ENCODE measurements at regions of chr12 and their contacts with region 1.

Region 1: DNA sequence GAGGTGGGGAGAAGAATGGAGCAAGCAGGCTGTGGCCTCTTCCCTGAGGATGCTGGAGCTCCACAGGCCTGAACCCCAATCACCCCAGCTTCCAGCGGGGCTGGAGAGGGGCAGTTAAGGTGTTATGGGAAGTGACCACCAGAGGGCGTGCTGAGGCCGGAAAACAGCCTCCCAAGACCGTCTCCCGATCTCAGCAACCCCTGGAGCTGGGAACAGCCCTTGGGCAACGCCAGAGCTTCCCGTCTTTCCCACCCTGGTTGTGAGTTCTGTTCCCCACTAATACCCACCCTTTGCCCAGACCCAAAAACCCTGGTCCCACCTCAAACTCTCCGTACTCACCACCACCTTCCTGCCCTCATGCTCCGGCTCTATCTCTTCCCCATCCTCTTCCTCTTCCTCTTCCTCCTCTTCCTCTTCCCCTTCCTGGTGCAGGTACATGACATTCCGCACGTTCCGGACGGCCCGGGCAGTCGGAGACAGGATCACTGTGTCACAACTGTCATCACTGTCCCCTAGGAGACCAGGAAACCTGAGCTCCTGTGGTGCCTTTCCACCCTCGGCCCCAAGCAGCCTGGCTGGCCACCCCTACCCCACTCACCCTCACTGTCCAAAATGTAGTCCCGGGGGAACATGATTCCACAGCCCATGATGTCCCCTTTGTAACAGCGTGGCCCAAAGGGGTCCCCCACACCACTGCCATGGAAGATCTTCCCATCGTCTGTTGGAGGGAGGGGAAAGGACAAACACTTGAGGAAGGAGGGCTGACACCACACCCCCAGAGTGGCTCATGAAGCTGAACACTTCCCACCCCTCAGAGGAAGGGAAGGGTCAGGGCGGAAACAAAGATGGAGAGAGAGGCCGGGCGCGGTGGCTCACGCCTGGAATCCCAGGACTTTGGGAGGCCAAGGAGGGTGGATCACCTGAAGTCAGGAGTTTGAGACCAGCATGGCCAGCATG is 12.9 kb downstream of the SPRYD3 start:
- DNase-seq: peak; percentile 65
- H3K4me3 ChIP-seq: no peak overlapping the region
- H3K27ac ChIP-seq: peak overlapping the region; percentile 44
- H3K4me1 ChIP-seq: peaks cover 22% of the 10 kb centered on the region
- H3K27me3 ChIP-seq: no peaks in the 10 kb centered on the region
- CTCF ChIP-seq: peak; percentile 85 to 90
- POLR2A ChIP-seq: peak; percentile 39

Region 2: GRCh38 chr12:52949413-52950331 is 116.6 kb before region 1 on chr12:
- CTCF ChIA-PET with region 1: no interaction called
- POLR2A ChIA-PET with region 1: no interaction called
- dilution Hi-C with region 1: no loop called
- intact Hi-C with region 1: no loop called
- DNase-seq: peak; percentile 96
- H3K4me3 ChIP-seq: peak overlapping the region; percentile 67 to 93 (median 74)
- H3K27ac ChIP-seq: peak overlapping the region; percentile 91
- H3K4me1 ChIP-seq: peaks cover 37% of the 10 kb centered on the region
- H3K27me3 ChIP-seq: no peaks in the 10 kb centered on the region
- CTCF ChIP-seq: no peak
- POLR2A ChIP-seq: no peak

Region 3: DNA sequence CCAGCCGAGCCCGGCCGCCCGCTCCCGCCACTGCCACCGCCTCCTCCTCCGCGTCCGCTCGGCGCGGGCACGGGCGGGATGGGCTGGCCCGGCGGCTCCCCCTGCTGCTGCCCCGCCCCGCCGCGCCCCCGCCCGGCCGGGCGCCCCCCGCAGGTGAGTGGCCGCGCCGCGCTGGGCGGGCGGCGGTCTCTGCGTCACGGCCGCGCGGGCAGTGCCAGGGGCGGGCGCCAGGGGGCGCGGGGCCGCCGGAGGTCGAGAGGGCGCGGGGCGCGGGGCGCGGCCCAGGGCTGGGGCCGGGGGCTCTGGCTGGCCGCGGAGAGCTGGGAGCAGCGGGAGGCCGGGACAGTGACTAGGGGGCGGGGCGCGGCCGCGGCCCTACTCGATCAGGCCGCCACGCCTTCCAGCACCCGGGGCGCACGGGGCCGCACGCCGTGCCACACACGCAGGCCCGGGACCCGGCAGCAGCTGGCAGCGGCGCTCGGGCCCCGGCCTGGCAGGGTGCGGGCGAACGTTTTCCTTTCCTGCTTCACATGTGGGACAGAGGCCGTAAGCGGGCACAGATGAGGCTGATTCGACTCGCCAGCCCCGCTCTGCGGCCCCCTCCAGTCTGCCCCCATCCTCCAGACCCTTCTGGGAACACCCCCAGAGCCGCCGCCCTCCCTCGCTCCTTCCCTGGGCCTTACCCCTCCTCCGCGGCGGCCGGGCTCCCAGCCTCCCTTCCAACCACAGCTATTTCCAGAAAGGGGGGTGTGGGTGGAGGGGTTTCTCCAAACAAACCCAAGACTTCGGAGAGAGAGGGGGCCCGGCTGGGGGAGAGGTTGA is 18.8 kb before region 1 on chr12:
- CTCF ChIA-PET with region 1: interaction called, 79 read pairs
- POLR2A ChIA-PET with region 1: no interaction called
- dilution Hi-C with region 1: no loop called
- intact Hi-C with region 1: loop called (anchors 1 kb)
- DNase-seq: peak; percentile 32
- H3K4me3 ChIP-seq: peak overlapping the region in 1 of 3 experiments; percentile 56
- H3K27ac ChIP-seq: peak overlapping the region; percentile 26
- H3K4me1 ChIP-seq: peaks cover 52% of the 10 kb centered on the region
- H3K27me3 ChIP-seq: no peaks in the 10 kb centered on the region
- CTCF ChIP-seq: peak in 1 of 2 donors; percentile 3
- POLR2A ChIP-seq: no peak

Region 4: DNA sequence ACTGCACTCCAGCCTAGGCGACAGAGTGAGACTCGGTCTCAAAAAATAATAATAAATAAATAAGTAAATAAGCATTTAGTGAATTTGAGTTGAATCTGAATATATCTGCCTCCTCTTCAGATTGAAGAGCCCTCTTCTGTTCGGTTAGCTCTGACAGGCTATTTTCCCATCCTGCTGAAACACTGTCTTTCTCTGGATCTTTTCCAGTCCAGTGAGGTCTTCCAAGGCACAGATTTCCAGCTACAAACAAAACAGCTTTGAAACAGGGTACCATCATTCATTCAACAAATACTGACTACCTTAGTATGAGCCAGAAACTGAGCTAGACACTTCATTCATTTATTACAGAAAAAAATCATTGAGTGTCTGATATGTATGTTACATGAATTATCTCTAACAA is 20.1 kb after region 1 on chr12:
- CTCF ChIA-PET with region 1: interaction called, 91 read pairs
- POLR2A ChIA-PET with region 1: no interaction called
- dilution Hi-C with region 1: no loop called
- intact Hi-C with region 1: no loop called
- DNase-seq: no peak
- H3K4me3 ChIP-seq: no peak overlapping the region
- H3K27ac ChIP-seq: no peak overlapping the region
- H3K4me1 ChIP-seq: no peaks in the 10 kb centered on the region
- H3K27me3 ChIP-seq: peaks cover 5 to 9% of the 10 kb centered on the region in 2 experiments
- CTCF ChIP-seq: no peak
- POLR2A ChIP-seq: no peak

Region 5: DNA sequence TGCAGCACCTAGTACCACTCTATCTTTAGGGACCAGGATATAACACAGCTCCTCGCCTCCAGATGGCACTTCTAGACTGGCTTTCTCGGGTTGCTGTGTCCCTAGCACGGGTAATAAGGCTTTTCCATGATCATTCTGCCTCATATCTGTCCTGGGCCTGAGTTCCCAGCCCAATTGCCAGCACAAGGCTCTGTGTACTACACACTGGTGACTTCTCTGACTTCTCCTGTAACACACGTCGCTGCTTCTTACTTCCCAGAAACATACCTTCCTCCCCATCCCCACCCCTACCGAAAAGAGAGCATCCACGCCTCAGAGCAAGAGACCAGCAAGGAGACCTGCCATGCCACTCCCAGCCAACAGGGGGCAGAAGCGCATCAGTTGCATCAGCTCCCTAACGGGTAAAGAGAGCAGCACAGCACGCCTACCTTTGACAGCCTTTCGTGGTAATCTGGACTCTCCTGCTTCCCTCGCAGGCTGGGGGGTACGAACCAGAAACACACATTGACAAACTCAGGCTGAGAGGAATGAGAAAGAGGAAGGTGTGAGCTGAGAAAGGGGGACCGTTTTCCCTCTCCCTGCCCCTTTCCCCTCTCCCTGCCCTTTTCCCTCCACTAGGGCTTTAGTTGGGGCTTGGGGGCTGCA is 93.1 kb after region 1 on chr12:
- CTCF ChIA-PET with region 1: interaction called, 58 read pairs
- POLR2A ChIA-PET with region 1: no interaction called
- dilution Hi-C with region 1: no loop called
- intact Hi-C with region 1: loop called (anchors 1 kb)
- DNase-seq: peak; percentile 66
- H3K4me3 ChIP-seq: no peak overlapping the region
- H3K27ac ChIP-seq: no peak overlapping the region
- H3K4me1 ChIP-seq: no peaks in the 10 kb centered on the region
- H3K27me3 ChIP-seq: no peaks in the 10 kb centered on the region
- CTCF ChIP-seq: peak; percentile 98 to 99
- POLR2A ChIP-seq: no peak

Region 6: GRCh38 chr12:53190108-53190729 is 124.0 kb after region 1 on chr12:
- CTCF ChIA-PET with region 1: interaction called, 101 read pairs
- POLR2A ChIA-PET with region 1: interaction called, 4 read pairs
- dilution Hi-C with region 1: no loop called
- intact Hi-C with region 1: loop called (anchors 1 kb)
- DNase-seq: peak; percentile 49
- H3K4me3 ChIP-seq: no peak overlapping the region
- H3K27ac ChIP-seq: no peak overlapping the region
- H3K4me1 ChIP-seq: peaks cover 4% of the 10 kb centered on the region
- H3K27me3 ChIP-seq: no peaks in the 10 kb centered on the region
- CTCF ChIP-seq: peak; percentile 73 to 86
- POLR2A ChIP-seq: no peak

Measured in endothelial cell of umbilical vein (primary cell).